MCF 10A (cell line): ENCODE measurements at regions of chr15 and their contacts with region 1.

Region 1: DNA sequence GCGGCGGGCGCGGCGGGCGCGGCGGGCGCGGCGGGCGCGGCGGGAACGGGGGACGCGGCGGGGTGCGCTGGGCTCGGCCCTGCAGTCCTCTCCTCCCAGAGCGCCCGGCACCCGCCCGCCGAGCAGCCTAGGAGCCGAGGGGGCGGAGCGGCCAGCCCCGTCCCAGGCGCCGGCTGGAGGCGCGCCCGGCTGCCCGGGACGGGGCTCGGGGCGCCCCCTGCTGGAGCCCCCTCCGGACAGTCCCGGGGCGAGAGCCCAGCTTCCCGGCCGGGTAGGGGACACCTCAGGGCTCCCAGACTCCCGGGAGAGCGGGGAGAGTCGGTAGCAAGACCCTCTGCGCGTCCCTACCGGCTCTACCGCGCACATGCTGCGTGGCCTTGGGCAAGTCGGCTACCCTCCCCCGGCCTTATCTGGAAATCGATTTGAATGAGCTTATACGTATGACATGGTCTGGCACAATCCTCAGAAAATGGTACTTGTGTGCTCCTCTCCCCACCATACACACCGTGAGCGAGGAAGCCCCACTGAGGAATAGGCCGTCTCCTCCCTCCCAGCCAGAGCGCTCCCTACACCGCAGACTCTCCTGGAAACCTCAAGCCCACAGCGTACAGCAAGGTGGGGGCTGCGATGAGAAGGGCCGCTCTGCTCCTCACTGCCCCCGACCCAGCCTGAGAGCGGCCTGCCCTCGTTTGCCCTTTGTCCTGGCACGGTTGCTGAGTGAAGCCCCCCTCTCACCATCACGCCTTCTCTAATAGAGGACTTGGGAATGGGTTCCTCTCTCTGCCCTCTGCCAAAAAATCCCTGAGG is at the start of gene DAPK2:
- DNase-seq: peak; percentile 72
- H3K4me3 Mint-ChIP-seq: peak within 1 kb of the TSS; percentile 62
- H3K27ac Mint-ChIP-seq: no peak within 1 kb of the TSS
- H3K4me1 Mint-ChIP-seq: peaks cover 5% of the 10 kb centered on the region
- H3K27me3 Mint-ChIP-seq: peaks cover 12% of the 10 kb centered on the region
- CTCF ChIP-seq: peak; percentile 86
- total RNA-seq, gene DAPK2: 4.6 and 6.8 TPM in 2 replicates

Region 2: GRCh38 chr15:63752075-63752684 is 294.4 kb before region 1 on chr15:
- CTCF ChIA-PET with region 1: interaction called, 38 read pairs
- POLR2A ChIA-PET with region 1: interaction called, 7 read pairs
- intact Hi-C with region 1: loop called (anchors 1 kb)
- DNase-seq: peak; percentile 68
- H3K4me3 Mint-ChIP-seq: no peak overlapping the region
- H3K27ac Mint-ChIP-seq: peak overlapping the region; percentile 17
- H3K4me1 Mint-ChIP-seq: no peaks in the 10 kb centered on the region
- H3K27me3 Mint-ChIP-seq: no peaks in the 10 kb centered on the region
- CTCF ChIP-seq: peak; percentile 80

Region 3: GRCh38 chr15:63833021-63833696 is 213.4 kb before region 1 on chr15:
- CTCF ChIA-PET with region 1: no interaction called
- POLR2A ChIA-PET with region 1: interaction called, 7 read pairs
- intact Hi-C with region 1: loop called (anchors 5 kb)
- DNase-seq: peak; percentile 33
- H3K4me3 Mint-ChIP-seq: peak overlapping the region; percentile 99
- H3K27ac Mint-ChIP-seq: peak overlapping the region; percentile 99
- H3K4me1 Mint-ChIP-seq: peaks cover 24% of the 10 kb centered on the region
- H3K27me3 Mint-ChIP-seq: peaks cover 17% of the 10 kb centered on the region
- CTCF ChIP-seq: no peak

Region 4: GRCh38 chr15:63891079-63891767 is 155.3 kb before region 1 on chr15:
- CTCF ChIA-PET with region 1: interaction called, 3 read pairs
- POLR2A ChIA-PET with region 1: no interaction called
- intact Hi-C with region 1: loop called (anchors 1 kb)
- DNase-seq: peak; percentile 83
- H3K4me3 Mint-ChIP-seq: no peak overlapping the region
- H3K27ac Mint-ChIP-seq: no peak overlapping the region
- H3K4me1 Mint-ChIP-seq: no peaks in the 10 kb centered on the region
- H3K27me3 Mint-ChIP-seq: no peaks in the 10 kb centered on the region
- CTCF ChIP-seq: peak; percentile 77

Region 5: GRCh38 chr15:63983061-63983711 is 63.4 kb before region 1 on chr15:
- CTCF ChIA-PET with region 1: interaction called, 15 read pairs
- POLR2A ChIA-PET with region 1: interaction called, 3 read pairs
- intact Hi-C with region 1: no loop called
- DNase-seq: no peak
- H3K4me3 Mint-ChIP-seq: no peak overlapping the region
- H3K27ac Mint-ChIP-seq: no peak overlapping the region
- H3K4me1 Mint-ChIP-seq: no peaks in the 10 kb centered on the region
- H3K27me3 Mint-ChIP-seq: no peaks in the 10 kb centered on the region
- CTCF ChIP-seq: no peak

Region 6: DNA sequence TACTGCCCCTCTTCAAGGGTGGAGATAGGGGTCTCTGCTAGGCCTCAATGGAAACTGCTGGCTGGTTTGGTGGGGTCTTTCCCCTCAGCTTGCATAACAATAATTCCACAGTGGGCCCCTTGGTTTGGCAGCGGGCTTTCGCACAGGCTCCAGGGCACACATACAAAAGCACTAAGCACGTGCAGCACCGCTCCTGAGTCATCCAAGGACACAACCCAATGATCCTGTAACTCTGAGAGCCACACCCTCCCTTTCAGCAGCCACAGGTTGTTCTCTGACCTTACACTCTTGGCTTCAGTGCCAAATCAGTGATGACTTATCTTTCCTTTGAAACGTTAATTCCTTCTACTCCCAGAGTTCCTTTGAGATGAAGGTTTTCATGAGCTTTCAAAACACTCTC is 42.0 kb before region 1 on chr15:
- CTCF ChIA-PET with region 1: interaction called, 6 read pairs
- POLR2A ChIA-PET with region 1: interaction called, 18 read pairs
- intact Hi-C with region 1: loop called (anchors 2 kb)
- DNase-seq: peak; percentile 98
- H3K4me3 Mint-ChIP-seq: no peak overlapping the region
- H3K27ac Mint-ChIP-seq: peak overlapping the region; percentile 65
- H3K4me1 Mint-ChIP-seq: peaks cover 64% of the 10 kb centered on the region
- H3K27me3 Mint-ChIP-seq: no peaks in the 10 kb centered on the region
- CTCF ChIP-seq: no peak

Region 7: GRCh38 chr15:64010719-64011118 is 35.8 kb before region 1 on chr15:
- CTCF ChIA-PET with region 1: interaction called, 13 read pairs
- POLR2A ChIA-PET with region 1: interaction called, 18 read pairs
- intact Hi-C with region 1: loop called (anchors 2 kb)
- DNase-seq: peak; percentile 97
- H3K4me3 Mint-ChIP-seq: peak overlapping the region; percentile 31
- H3K27ac Mint-ChIP-seq: peak overlapping the region; percentile 84
- H3K4me1 Mint-ChIP-seq: peaks cover 68% of the 10 kb centered on the region
- H3K27me3 Mint-ChIP-seq: no peaks in the 10 kb centered on the region
- CTCF ChIP-seq: no peak